ENCODE measurements at regions of chr16 and their contacts with region 1.

Region 1: GRCh38 chr16:69204172-69204571 is 17.2 kb downstream of the SNTB2 start:
- DNase-seq: no peak
- H3K4me3 Mint-ChIP-seq: no peak overlapping the region
- H3K27ac Mint-ChIP-seq: no peak overlapping the region
- H3K4me1 Mint-ChIP-seq: peaks cover 16% of the 10 kb centered on the region
- H3K27me3 Mint-ChIP-seq: no peaks in the 10 kb centered on the region

Region 2: DNA sequence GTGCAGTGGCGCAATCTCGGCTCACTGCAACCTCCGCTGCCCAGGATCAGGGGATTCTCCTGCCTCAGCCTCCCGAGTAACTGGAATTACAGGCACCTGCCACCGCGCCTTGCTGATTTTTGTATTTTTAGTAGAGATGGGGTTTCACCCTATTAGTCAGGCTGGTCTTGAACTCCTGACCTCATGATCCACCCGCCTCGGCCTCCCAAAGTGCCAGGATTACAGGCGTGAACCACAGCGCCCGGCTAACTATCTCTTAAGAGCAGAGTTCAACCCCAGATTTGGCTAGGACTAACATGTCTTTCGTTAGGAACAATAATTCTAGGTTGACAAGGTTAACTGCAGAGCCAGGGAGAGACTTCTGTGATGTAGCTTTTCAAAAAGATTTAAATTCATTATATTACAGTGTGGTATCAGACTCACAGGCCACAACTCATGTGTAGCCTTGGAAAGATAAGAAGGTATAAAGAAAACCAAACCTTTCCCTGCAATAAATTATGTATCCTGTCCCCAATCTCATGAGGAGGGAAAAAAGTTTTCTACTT is 76.1 kb before region 1 on chr16:
- CTCF ChIA-PET with region 1: no interaction called
- intact Hi-C with region 1: no loop called
- DNase-seq: no peak
- H3K4me3 Mint-ChIP-seq: no peak overlapping the region
- H3K27ac Mint-ChIP-seq: no peak overlapping the region
- H3K4me1 Mint-ChIP-seq: peaks cover 38% of the 10 kb centered on the region
- H3K27me3 Mint-ChIP-seq: no peaks in the 10 kb centered on the region

Region 3: GRCh38 chr16:69186642-69187445 is 17.3 kb before region 1 on chr16 and contains the start of gene SNTB2:
- CTCF ChIA-PET with region 1: no interaction called
- intact Hi-C with region 1: loop called (anchors 1 kb)
- DNase-seq: peak; percentile 86
- H3K4me3 Mint-ChIP-seq: peak within 1 kb of the TSS; percentile 91
- H3K27ac Mint-ChIP-seq: peak within 1 kb of the TSS; percentile 83
- H3K4me1 Mint-ChIP-seq: peaks cover 42% of the 10 kb centered on the region
- H3K27me3 Mint-ChIP-seq: no peaks in the 10 kb centered on the region
- total RNA-seq, gene SNTB2: 7.3 to 7.8 TPM

Region 4: GRCh38 chr16:69276148-69277115 is 72.3 kb after region 1 on chr16:
- CTCF ChIA-PET with region 1: no interaction called
- intact Hi-C with region 1: loop called (anchors 10 kb)
- DNase-seq: no peak
- H3K4me3 Mint-ChIP-seq: no peak overlapping the region
- H3K27ac Mint-ChIP-seq: no peak overlapping the region
- H3K4me1 Mint-ChIP-seq: no peaks in the 10 kb centered on the region
- H3K27me3 Mint-ChIP-seq: no peaks in the 10 kb centered on the region